Cardiac septum (tissue), 1 donor: ENCODE measurements at regions of chr6 and their contacts with region 1.

Region 1: DNA sequence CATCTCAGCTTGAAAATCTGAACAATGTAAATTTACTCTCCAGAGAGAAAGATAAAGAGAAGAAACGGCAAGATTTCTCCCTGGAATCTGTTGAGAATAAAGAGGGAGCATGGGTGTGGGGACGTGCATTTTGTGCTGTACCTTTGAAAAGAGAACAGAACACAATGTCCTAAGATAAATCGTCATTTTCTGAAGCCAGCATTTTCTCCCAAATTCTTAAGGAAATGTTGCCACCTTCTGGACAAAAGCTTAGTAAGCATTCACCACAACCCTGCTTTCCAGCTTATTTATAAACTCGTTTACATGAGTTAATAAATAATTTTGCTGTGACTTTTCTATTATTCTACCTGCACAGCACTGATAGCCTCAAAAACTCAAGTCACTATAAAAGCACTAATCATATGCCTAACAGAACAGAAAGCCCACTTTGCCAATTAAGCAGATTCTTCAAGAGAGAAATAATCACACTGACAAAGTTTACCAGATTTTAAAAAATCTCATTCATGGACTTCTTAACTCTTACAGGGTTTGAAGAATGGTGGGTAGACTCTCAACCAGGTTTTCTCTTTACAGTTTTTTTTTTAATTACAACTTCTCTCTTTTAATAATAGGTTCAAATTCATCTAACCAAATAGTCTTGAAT is 155.8 kb downstream of the MBOAT1 start:
- DNase-seq: no peak

Region 2: GRCh38 chr6:18595774-18596530 is 1460.5 kb before region 1 on chr6:
- intact Hi-C with region 1: loop called (anchors 10 kb)
- DNase-seq: no peak